ENCODE measurements at regions of chr21 and their contacts with region 1.

Region 1: GRCh38 chr21:16366207-16366606 is 636.4 kb downstream of the USP25 start:
- DNase-seq: no peak
- ATAC-seq: no peak
- H3K4me3 Mint-ChIP-seq: no peak overlapping the region
- H3K27ac Mint-ChIP-seq: no peak overlapping the region
- H3K4me1 Mint-ChIP-seq: no peaks in the 10 kb centered on the region
- H3K27me3 Mint-ChIP-seq: no peaks in the 10 kb centered on the region

Region 2: DNA sequence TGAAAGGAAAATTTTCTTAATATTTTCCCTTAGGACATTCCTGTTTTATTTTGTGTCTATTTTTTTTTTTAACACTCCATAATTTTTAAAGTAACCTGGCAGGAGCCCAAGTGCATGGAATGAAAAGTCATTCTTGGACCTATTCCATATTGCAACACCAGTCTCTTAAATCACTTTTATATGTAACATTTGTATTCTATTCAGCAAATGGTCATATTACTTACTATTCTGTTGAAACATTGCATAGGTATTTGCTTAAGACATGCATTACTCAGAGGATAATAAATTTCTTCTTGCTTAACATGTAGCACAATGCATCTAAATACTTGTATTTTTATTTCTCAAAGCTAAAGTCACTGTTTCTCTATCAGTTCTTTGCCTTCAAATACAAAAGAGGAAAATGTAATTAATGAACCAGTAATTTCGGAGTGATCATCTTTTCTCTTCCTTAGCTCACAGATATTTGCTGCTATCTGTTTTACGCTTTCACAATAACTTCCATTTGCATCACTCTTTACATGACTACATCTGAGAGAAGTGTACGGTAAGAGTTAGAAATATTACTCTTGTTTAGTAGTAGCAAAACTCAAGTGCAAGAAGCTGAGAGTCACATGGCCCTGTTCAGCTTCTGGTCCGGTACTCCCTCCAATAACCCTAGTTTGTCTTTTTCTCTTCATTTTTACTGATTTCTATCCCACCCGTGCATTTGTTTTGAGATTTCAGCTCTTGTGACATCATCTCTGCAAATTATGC is 241.7 kb before region 1 on chr21:
- CTCF ChIA-PET with region 1: no interaction called
- POLR2A ChIA-PET with region 1: no interaction called
- intact Hi-C with region 1: no loop called
- DNase-seq: no peak
- ATAC-seq: no peak
- H3K4me3 Mint-ChIP-seq: no peak overlapping the region
- H3K27ac Mint-ChIP-seq: no peak overlapping the region
- H3K4me1 Mint-ChIP-seq: no peaks in the 10 kb centered on the region
- H3K27me3 Mint-ChIP-seq: no peaks in the 10 kb centered on the region

Region 3: GRCh38 chr21:16388911-16389515 is 22.8 kb after region 1 on chr21:
- CTCF ChIA-PET with region 1: no interaction called
- POLR2A ChIA-PET with region 1: no interaction called
- intact Hi-C with region 1: no loop called
- DNase-seq: no peak
- ATAC-seq: no peak
- H3K4me3 Mint-ChIP-seq: no peak overlapping the region
- H3K27ac Mint-ChIP-seq: no peak overlapping the region
- H3K4me1 Mint-ChIP-seq: no peaks in the 10 kb centered on the region
- H3K27me3 Mint-ChIP-seq: no peaks in the 10 kb centered on the region

Region 4: GRCh38 chr21:17191346-17191993 is 825.3 kb after region 1 on chr21:
- CTCF ChIA-PET with region 1: no interaction called
- POLR2A ChIA-PET with region 1: interaction called, 10 read pairs
- intact Hi-C with region 1: no loop called
- DNase-seq: no peak
- ATAC-seq: no peak
- H3K4me3 Mint-ChIP-seq: no peak overlapping the region
- H3K27ac Mint-ChIP-seq: no peak overlapping the region
- H3K4me1 Mint-ChIP-seq: no peaks in the 10 kb centered on the region
- H3K27me3 Mint-ChIP-seq: no peaks in the 10 kb centered on the region

Measured in activated CD4-positive, alpha-beta T cell treated with anti-CD3 and anti-CD28 coated beads for 36 hours (primary cell).